ENCODE measurements at regions of chr17 and their contacts with region 1.

Region 1: DNA sequence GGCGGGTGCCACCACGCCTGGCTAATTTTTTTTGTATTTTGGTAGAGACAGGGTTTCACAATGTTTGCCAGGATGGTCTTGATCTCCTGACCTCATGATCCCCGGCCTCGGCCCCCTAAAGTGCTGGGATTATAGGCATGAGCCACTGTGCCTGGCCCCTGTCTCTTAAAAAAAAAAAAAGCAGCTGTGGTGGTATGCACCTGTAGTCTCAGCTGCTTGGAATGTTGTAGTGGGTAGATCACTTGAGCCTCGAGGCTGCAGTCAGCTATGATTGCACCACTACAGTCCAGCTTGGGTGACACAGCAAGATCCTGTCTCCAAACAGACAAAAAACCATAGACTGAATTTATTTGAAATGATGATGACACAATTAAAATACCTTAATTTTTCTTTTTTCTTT is 24.3 kb downstream of the CDK12 start:
- DNase-seq: peak; percentile 73 to 97
- H3K4me3 ChIP-seq: no peak overlapping the region
- H3K27ac ChIP-seq: peak overlapping the region; percentile 92
- H3K4me1 ChIP-seq: peaks cover 35% of the 10 kb centered on the region
- H3K27me3 ChIP-seq: no peaks in the 10 kb centered on the region
- CTCF ChIP-seq: no peak

Region 2: GRCh38 chr17:39352511-39352910 is 133.0 kb before region 1 on chr17:
- CTCF ChIA-PET with region 1: interaction called, 19 read pairs
- POLR2A ChIA-PET with region 1: no interaction called
- intact Hi-C with region 1: no loop called
- DNase-seq: no peak
- H3K4me3 ChIP-seq: no peak overlapping the region
- H3K27ac ChIP-seq: no peak overlapping the region
- H3K4me1 ChIP-seq: 0 out of 2 replicates have a peak, but pooled peaks cover 8% of the 10 kb centered on the region
- H3K27me3 ChIP-seq: no peaks in the 10 kb centered on the region
- CTCF ChIP-seq: peak; percentile 16; the same call in 1 of the 2 replicates

Region 3: GRCh38 chr17:39450847-39451581 is 34.5 kb before region 1 on chr17 and contains the start of gene MED1:
- CTCF ChIA-PET with region 1: no interaction called
- POLR2A ChIA-PET with region 1: interaction called, 5 read pairs
- intact Hi-C with region 1: loop called (anchors 5 kb)
- DNase-seq: peak; percentile 90 to 92
- H3K4me3 ChIP-seq: peak within 1 kb of the TSS; percentile 95
- H3K27ac ChIP-seq: peak within 1 kb of the TSS; percentile 82
- H3K4me1 ChIP-seq: peaks cover 6% of the 10 kb centered on the region
- H3K27me3 ChIP-seq: no peaks in the 10 kb centered on the region
- CTCF ChIP-seq: no peak
- total RNA-seq, gene MED1: 23.2 and 35.7 TPM in 2 replicates

Region 4: GRCh38 chr17:39461113-39461925 is 24.2 kb before region 1 on chr17 and contains the start of gene CDK12:
- CTCF ChIA-PET with region 1: interaction called, 3 read pairs
- POLR2A ChIA-PET with region 1: interaction called, 7 read pairs
- intact Hi-C with region 1: loop called (anchors 1 kb)
- DNase-seq: peak; percentile 92 to 98
- H3K4me3 ChIP-seq: peak within 1 kb of the TSS; percentile 98
- H3K27ac ChIP-seq: peak within 1 kb of the TSS; percentile 94
- H3K4me1 ChIP-seq: peaks cover 19% of the 10 kb centered on the region
- H3K27me3 ChIP-seq: no peaks in the 10 kb centered on the region
- CTCF ChIP-seq: no peak
- total RNA-seq, gene CDK12: 48.5 and 64.3 TPM in 2 replicates

Region 5: GRCh38 chr17:39513309-39513708 is 27.8 kb after region 1 on chr17:
- CTCF ChIA-PET with region 1: no interaction called
- POLR2A ChIA-PET with region 1: no interaction called
- intact Hi-C with region 1: no loop called
- DNase-seq: no peak
- H3K4me3 ChIP-seq: no peak overlapping the region
- H3K27ac ChIP-seq: no peak overlapping the region
- H3K4me1 ChIP-seq: no peaks in the 10 kb centered on the region
- H3K27me3 ChIP-seq: no peaks in the 10 kb centered on the region
- CTCF ChIP-seq: no peak

Region 6: GRCh38 chr17:39538866-39539265 is 53.3 kb after region 1 on chr17:
- CTCF ChIA-PET with region 1: no interaction called
- POLR2A ChIA-PET with region 1: interaction called, 12 read pairs
- intact Hi-C with region 1: no loop called
- DNase-seq: peak in 1 of 2 experiments; percentile 46
- H3K4me3 ChIP-seq: no peak overlapping the region
- H3K27ac ChIP-seq: no peak overlapping the region
- H3K4me1 ChIP-seq: peaks cover 19% of the 10 kb centered on the region
- H3K27me3 ChIP-seq: no peaks in the 10 kb centered on the region
- CTCF ChIP-seq: no peak

Region 7: GRCh38 chr17:39591958-39592954 is 106.7 kb after region 1 on chr17:
- CTCF ChIA-PET with region 1: no interaction called
- POLR2A ChIA-PET with region 1: no interaction called
- intact Hi-C with region 1: no loop called
- DNase-seq: peak; percentile 41 to 51
- H3K4me3 ChIP-seq: no peak overlapping the region
- H3K27ac ChIP-seq: no peak overlapping the region
- H3K4me1 ChIP-seq: no peaks in the 10 kb centered on the region
- H3K27me3 ChIP-seq: peaks cover 52% of the 10 kb centered on the region
- CTCF ChIP-seq: no peak

Region 8: DNA sequence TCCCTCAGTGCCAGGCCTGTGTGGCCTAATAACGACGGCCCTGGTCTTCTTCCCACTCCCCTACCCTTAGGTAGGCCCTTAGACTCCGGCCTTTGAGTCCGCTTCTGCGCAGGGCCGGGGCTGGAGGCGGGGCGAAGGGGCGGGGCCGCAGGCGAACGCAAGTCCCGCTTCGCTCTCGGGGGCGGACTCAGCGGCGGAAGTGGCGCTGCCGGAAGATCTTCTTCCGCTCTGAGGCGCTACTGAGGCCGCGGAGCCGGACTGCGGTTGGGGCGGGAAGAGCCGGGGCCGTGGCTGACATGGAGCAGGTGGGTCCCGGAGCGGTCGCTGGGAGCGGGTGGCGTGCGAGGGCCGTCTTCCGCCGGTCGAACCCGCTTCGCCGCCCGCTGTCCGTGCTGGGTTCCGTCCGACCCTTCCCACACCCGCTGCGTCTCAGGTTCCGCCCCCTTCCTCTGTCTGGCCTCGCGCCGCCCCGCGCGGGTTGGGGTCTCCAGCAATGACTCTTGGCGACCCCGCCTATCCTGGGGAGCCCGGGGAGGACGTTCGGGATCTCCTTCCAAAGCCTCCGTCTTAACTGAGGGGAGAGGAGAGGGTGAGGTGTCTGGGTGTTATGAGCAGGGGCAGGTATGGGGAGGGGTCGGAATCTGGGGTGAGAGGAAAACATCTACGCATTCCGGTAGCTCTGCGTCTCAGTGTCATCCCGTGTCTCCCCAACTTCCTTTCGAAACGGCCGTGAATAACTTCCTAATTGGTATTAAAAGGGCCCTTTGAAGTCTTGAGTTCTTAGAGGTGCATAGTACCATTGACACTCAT is 151.6 kb after region 1 on chr17 and contains the start of gene STARD3:
- CTCF ChIA-PET with region 1: no interaction called
- POLR2A ChIA-PET with region 1: interaction called, 26 read pairs
- intact Hi-C with region 1: no loop called
- DNase-seq: peak; percentile 74 to 82
- H3K4me3 ChIP-seq: peak within 1 kb of the TSS; percentile 98
- H3K27ac ChIP-seq: peak within 1 kb of the TSS; percentile 64
- H3K4me1 ChIP-seq: peaks cover 26% of the 10 kb centered on the region
- H3K27me3 ChIP-seq: no peaks in the 10 kb centered on the region
- CTCF ChIP-seq: no peak; the same call in 1 of the 2 replicates
- total RNA-seq, gene STARD3: 47.7 and 55.9 TPM in 2 replicates

Region 9: GRCh38 chr17:39738931-39739884 is 253.7 kb after region 1 on chr17:
- CTCF ChIA-PET with region 1: no interaction called
- POLR2A ChIA-PET with region 1: interaction called, 30 read pairs
- intact Hi-C with region 1: no loop called
- DNase-seq: peak; percentile 84 to 89
- H3K4me3 ChIP-seq: peak overlapping the region; percentile 83
- H3K27ac ChIP-seq: peak overlapping the region; percentile 93
- H3K4me1 ChIP-seq: peaks cover 41% of the 10 kb centered on the region
- H3K27me3 ChIP-seq: no peaks in the 10 kb centered on the region
- CTCF ChIP-seq: no peak

Region 10: GRCh38 chr17:39845052-39845846 is 359.7 kb after region 1 on chr17:
- CTCF ChIA-PET with region 1: no interaction called
- POLR2A ChIA-PET with region 1: no interaction called
- intact Hi-C with region 1: no loop called
- DNase-seq: no peak
- H3K4me3 ChIP-seq: no peak overlapping the region
- H3K27ac ChIP-seq: no peak overlapping the region
- H3K4me1 ChIP-seq: no peaks in the 10 kb centered on the region
- H3K27me3 ChIP-seq: no peaks in the 10 kb centered on the region
- CTCF ChIP-seq: no peak

Measured in PC-9 (cell line).